BJ (cell line): ENCODE measurements at regions of chr17 and their contacts with region 1.

Region 1: GRCh38 chr17:29640413-29640812 is 17.7 kb upstream of the CORO6 start:
- DNase-seq: peak; percentile 52
- H3K4me3 ChIP-seq: no peak overlapping the region
- H3K27me3 ChIP-seq: no peaks in the 10 kb centered on the region
- CTCF ChIP-seq: no peak

Region 2: GRCh38 chr17:29589524-29590410 is 50.6 kb before region 1 on chr17 and contains the start of gene GIT1:
- CTCF ChIA-PET with region 1: interaction called, 14 read pairs
- POLR2A ChIA-PET with region 1: no interaction called
- DNase-seq: no peak
- H3K4me3 ChIP-seq: peak within 1 kb of the TSS; percentile 79
- H3K27me3 ChIP-seq: no peaks in the 10 kb centered on the region
- CTCF ChIP-seq: no peak
- polyA plus RNA-seq, gene GIT1: 21.6 and 32.0 TPM in 2 replicates

Region 3: GRCh38 chr17:29625037-29625750 is 15.2 kb before region 1 on chr17:
- CTCF ChIA-PET with region 1: interaction called, 19 read pairs
- POLR2A ChIA-PET with region 1: interaction called, 4 read pairs
- DNase-seq: no peak
- H3K4me3 ChIP-seq: no peak overlapping the region
- H3K27me3 ChIP-seq: no peaks in the 10 kb centered on the region
- CTCF ChIP-seq: 0 out of 2 replicates have a peak, but pooled peaks have one; percentile 3

Region 4: GRCh38 chr17:29777663-29778062 is 137.2 kb after region 1 on chr17:
- CTCF ChIA-PET with region 1: interaction called, 147 read pairs
- POLR2A ChIA-PET with region 1: no interaction called
- DNase-seq: no peak
- H3K4me3 ChIP-seq: no peak overlapping the region
- H3K27me3 ChIP-seq: no peaks in the 10 kb centered on the region
- CTCF ChIP-seq: no peak

Region 5: DNA sequence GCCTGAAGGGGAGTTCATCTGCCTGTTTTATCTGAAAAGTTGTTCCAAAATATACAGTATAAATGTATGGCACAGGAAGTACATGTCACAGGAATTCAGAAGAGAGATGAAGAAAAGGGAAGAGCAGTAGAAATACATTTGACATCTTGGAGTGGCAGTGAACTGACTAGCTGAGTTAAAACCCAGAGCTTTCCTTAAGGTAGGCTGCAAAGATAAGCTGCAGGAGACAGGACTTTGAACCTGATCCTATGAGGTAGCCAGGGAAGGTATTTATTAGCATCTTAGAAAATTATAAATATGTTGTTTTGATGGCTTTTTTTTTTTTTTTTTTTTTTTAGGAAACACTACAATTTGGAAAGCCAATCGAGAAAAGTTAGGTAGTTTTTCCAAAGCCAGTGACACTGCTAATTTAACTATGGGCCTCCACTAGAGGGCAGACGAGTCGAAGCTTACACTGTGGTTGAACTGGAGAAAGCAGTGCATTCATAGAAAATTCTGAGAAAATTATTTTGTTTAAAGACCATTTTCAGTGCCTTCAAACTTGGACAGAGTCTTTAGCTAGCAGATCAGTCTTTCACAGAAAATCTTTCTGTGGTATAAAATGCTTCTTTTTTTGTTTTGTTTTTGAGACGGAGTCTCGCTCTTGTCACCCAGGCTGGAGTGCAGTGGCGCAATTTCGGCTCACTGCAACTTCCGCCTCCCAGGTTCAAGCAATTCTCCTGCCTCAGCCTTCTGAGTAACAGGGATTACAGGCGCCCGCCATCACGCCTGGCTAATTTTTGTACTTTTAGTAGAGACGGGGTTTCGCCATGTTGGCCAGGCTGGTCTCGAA is 167.3 kb after region 1 on chr17:
- CTCF ChIA-PET with region 1: interaction called, 13 read pairs
- POLR2A ChIA-PET with region 1: no interaction called
- DNase-seq: no peak
- H3K4me3 ChIP-seq: no peak overlapping the region
- H3K27me3 ChIP-seq: no peaks in the 10 kb centered on the region
- CTCF ChIP-seq: peak; percentile 73